Ovary (tissue), 10 donors: ENCODE measurements at regions of chr12 and their contacts with region 1.

Region 1: GRCh38 chr12:13196130-13196921 is at the start of gene EMP1:
- DNase-seq: peak; percentile 89 to 98 (median 92)
- H3K4me3 ChIP-seq: peak within 1 kb of the TSS; percentile 52
- H3K27ac ChIP-seq: peak within 1 kb of the TSS; percentile 60 to 82
- H3K4me1 ChIP-seq: peaks cover 3% of the 10 kb centered on the region
- H3K27me3 ChIP-seq: no peaks in the 10 kb centered on the region
- CTCF ChIP-seq: no peak
- EP300 ChIP-seq: no peak
- POLR2A ChIP-seq: peak; percentile 73
- total RNA-seq, gene EMP1: 30.5 to 113 (median 64.1) TPM

Region 2: DNA sequence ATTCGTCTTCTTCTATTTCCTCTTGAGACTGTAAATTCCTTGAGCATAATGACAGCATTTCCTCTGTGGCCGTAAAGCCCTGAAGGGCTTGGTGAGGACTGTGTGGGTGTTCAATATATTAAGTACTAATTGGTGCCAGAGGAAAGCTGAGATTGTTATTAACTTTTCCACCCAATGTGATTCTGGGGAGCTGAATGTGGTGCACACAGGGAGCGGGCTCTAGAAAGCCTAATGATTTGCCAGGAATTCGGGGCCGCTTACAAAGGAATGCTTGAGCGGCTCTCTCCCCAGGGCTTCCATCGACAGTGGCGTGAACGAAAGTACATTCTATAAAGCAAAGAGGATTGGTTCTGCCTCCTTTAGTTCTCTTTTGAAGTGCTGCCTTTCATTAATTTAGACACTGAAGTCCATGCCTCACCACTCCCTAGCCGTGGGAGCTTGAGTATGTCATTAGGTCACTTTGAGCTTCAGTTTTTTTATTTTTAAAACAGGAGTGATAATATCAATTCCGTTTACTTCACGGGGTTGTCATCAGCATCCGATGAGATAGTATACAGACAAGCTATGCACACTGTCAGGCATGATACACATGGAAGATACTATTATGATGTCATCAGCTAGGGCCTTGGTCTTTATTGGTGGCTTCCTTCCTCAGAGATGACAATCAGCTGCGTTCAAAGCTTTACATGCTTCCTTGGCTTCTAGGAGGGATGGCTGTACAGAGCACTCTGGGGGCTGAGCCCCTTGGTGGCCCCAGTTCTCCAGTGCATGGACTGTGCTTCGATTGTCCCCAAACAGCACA is 81.9 kb before region 1 on chr12:
- intact Hi-C with region 1: loop called in 2 of 4 experiments (anchors 5 to 10 kb)
- DNase-seq: no peak
- H3K4me3 ChIP-seq: no peak overlapping the region
- H3K27ac ChIP-seq: no peak overlapping the region
- H3K4me1 ChIP-seq: no peaks in the 10 kb centered on the region
- H3K27me3 ChIP-seq: no peaks in the 10 kb centered on the region
- CTCF ChIP-seq: no peak
- EP300 ChIP-seq: no peak
- POLR2A ChIP-seq: no peak

Region 3: GRCh38 chr12:13250416-13250815 is 54.1 kb after region 1 on chr12:
- intact Hi-C with region 1: no loop called
- DNase-seq: no peak
- H3K4me3 ChIP-seq: no peak overlapping the region
- H3K27ac ChIP-seq: no peak overlapping the region
- H3K4me1 ChIP-seq: no peaks in the 10 kb centered on the region
- H3K27me3 ChIP-seq: no peaks in the 10 kb centered on the region
- CTCF ChIP-seq: no peak
- EP300 ChIP-seq: no peak
- POLR2A ChIP-seq: no peak

Region 4: DNA sequence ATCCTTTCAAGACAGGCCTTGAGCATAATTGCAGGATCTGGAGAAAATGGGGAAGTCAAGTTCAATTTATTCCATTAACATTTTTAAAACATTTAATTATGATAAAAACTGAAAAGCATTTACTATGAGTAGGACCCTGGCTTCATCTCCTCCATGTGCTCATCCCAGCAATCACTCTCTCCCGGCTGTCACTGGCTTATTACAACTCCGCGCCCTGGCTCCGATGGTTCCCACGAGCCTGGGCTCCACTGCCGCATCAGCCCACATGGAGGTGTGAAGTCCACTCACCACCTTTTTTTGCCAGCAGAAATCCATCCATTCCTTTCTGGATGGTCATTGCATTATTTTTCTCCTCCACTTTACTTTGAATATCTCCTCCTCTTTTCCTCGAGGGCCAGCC is 194.6 kb after region 1 on chr12:
- intact Hi-C with region 1: no loop called
- DNase-seq: no peak
- H3K4me3 ChIP-seq: no peak overlapping the region
- H3K27ac ChIP-seq: no peak overlapping the region
- H3K4me1 ChIP-seq: peaks cover 3% of the 10 kb centered on the region
- H3K27me3 ChIP-seq: no peaks in the 10 kb centered on the region
- CTCF ChIP-seq: no peak
- EP300 ChIP-seq: no peak
- POLR2A ChIP-seq: no peak